Testis (tissue), 5 donors: ENCODE measurements at regions of chr11 and their contacts with region 1.

Region 1: GRCh38 chr11:299951-300735 is 817 bp upstream of the IFITM5 start:
- DNase-seq: no peak
- H3K4me3 ChIP-seq: no peak overlapping the region
- H3K27ac ChIP-seq: no peak overlapping the region
- H3K4me1 ChIP-seq: peaks cover 14% of the 10 kb centered on the region
- H3K27me3 ChIP-seq: no peaks in the 10 kb centered on the region
- CTCF ChIP-seq: no peak
- POLR2A ChIP-seq: no peak

Region 2: DNA sequence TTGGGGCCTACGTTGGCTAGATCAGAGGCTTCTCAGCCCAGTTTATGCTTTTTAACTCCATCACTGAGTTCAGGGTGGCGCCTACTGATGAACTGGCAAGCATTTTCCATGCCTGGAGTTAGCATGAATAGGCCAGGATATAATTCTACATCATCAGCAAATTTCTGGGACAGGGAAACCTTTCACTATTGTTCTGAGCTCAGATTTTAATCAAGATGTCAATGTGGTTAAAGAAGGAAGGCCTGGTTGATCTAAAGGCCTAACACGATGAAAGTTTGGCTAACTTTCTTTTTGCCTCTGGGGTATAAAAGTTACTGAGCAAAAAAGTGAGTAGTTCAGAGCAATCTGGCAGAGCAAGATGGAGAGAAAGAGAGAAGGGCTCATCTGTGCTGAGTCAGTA is 42.2 kb after region 1 on chr11:
- intact Hi-C with region 1: no loop called
- DNase-seq: no peak
- H3K4me3 ChIP-seq: no peak overlapping the region
- H3K27ac ChIP-seq: no peak overlapping the region
- H3K4me1 ChIP-seq: peaks cover 4% of the 10 kb centered on the region
- H3K27me3 ChIP-seq: no peaks in the 10 kb centered on the region
- CTCF ChIP-seq: no peak
- POLR2A ChIP-seq: no peak

Region 3: DNA sequence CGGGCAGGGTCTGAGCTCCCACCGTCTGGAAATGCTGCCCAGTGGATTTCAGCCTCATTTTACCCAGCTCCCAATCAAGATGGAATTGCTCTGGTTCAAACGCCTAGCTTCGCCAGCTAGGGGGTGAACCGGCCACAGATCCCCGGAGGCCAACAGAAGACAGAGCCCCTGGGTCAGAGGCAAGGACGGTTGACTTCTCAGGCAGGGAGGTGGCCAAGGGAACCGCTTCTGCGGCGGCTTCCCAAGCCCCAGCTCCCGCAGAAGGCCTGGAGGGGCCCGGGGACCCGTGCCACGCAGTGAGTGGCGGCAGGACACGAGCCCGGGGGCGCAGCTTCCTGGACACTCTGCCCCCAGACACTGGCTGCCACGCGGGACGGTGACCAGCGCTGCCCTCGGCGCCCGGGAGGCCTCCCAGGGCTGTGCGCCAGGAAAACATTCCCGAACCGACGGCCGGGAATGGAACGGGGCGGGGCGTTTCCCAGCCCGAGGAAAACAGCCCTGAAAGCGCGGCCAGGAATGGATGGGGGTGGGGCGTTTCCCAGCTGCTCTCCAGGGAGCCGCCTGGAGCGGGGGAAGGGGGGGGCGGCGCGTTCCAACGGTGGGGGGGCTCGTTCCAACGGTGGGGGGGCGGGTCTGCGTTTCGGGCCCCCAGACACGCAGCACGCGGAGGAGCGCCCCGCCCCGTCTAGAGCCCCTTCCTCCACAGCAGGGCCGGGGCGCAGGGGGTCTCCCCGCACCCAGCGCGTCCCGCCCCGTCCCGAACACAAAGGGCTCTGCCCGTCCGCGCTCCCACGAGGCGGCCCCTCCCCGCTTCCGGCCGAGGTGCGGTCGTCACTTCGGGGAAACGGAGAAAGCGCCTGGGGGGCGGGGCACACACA is 55.7 kb after region 1 on chr11:
- intact Hi-C with region 1: loop called (anchors 10 kb)
- DNase-seq: peak; percentile 91
- H3K4me3 ChIP-seq: peak overlapping the region; percentile 40 to 45
- H3K27ac ChIP-seq: peak overlapping the region; percentile 98 to 99
- H3K4me1 ChIP-seq: peaks cover 28% of the 10 kb centered on the region
- H3K27me3 ChIP-seq: no peaks in the 10 kb centered on the region
- CTCF ChIP-seq: no peak
- POLR2A ChIP-seq: no peak

Region 4: DNA sequence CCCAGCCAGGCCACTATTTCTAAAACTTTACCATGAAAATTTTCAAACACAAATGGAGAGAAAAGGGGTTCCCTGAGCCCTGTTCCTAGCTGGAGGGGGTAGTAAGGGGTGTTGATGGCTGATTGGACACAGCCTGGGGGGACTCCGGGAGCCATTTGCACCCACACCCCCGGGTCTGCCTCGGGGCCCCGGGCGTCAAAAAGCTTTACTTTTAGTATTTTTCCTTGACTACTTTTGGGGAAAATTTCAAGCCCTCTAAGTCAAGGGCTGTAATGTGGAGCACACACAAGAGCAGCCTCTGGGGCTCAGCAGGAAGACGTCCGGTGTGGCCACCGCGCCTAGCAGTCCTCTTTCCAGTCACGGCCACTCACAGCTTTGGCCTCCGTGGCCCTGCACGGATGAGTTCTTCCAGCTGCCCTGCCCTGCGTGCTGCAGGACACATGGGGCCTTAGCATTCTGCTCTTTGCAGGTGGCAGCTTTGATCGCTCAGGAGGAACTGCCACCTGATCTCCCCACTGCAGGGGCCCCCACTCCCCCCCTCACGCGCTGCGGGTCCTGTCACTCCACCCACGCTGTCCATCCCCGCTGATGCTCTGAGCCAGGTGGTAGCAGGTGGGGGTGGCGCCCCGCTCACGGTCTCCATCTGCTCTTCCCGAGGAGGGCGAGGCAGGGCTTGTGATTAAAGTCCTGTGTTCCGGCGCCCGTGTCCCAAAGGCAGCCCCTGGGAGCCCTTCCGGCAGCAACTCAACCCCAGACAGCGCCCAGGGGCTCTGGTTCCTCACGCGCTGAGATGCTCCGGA is 192.5 kb after region 1 on chr11:
- intact Hi-C with region 1: no loop called
- DNase-seq: no peak
- H3K4me3 ChIP-seq: no peak overlapping the region
- H3K27ac ChIP-seq: no peak overlapping the region
- H3K4me1 ChIP-seq: peaks cover 7% of the 10 kb centered on the region
- H3K27me3 ChIP-seq: no peaks in the 10 kb centered on the region
- CTCF ChIP-seq: no peak
- POLR2A ChIP-seq: no peak